ENCODE measurements at regions of chr14 and their contacts with region 1.

Region 1: GRCh38 chr14:68487805-68488590 is 304.9 kb downstream of the ZFP36L1 start:
- DNase-seq: no peak
- H3K4me3 ChIP-seq: no peak overlapping the region
- H3K4me3 Mint-ChIP-seq: no peak overlapping the region
- H3K27ac Mint-ChIP-seq: peak overlapping the region; percentile 94
- H3K4me1 ChIP-seq: peaks cover 50% of the 10 kb centered on the region
- H3K4me1 Mint-ChIP-seq: peaks cover 55% of the 10 kb centered on the region
- H3K27me3 ChIP-seq: no peaks in the 10 kb centered on the region
- H3K27me3 Mint-ChIP-seq: no peaks in the 10 kb centered on the region
- CTCF ChIP-seq: no peak

Region 2: GRCh38 chr14:68426661-68427549 is 61.1 kb before region 1 on chr14:
- CTCF ChIA-PET with region 1: no interaction called
- POLR2A ChIA-PET with region 1: no interaction called
- intact Hi-C with region 1: no loop called
- DNase-seq: no peak
- H3K4me3 ChIP-seq: no peak overlapping the region
- H3K4me3 Mint-ChIP-seq: no peak overlapping the region
- H3K27ac Mint-ChIP-seq: no peak overlapping the region
- H3K4me1 ChIP-seq: peaks cover 8% of the 10 kb centered on the region; the same call in 1 of the 2 replicates
- H3K4me1 Mint-ChIP-seq: peaks cover 6% of the 10 kb centered on the region
- H3K27me3 ChIP-seq: no peaks in the 10 kb centered on the region
- H3K27me3 Mint-ChIP-seq: no peaks in the 10 kb centered on the region
- CTCF ChIP-seq: no peak

Region 3: GRCh38 chr14:68655911-68656360 is 167.9 kb after region 1 on chr14:
- CTCF ChIA-PET with region 1: no interaction called
- POLR2A ChIA-PET with region 1: no interaction called
- intact Hi-C with region 1: loop called (anchors 10 kb)
- DNase-seq: peak; percentile 48 to 50
- H3K4me3 ChIP-seq: no peak overlapping the region
- H3K4me3 Mint-ChIP-seq: no peak overlapping the region
- H3K27ac Mint-ChIP-seq: no peak overlapping the region
- H3K4me1 ChIP-seq: peaks cover 36% of the 10 kb centered on the region
- H3K4me1 Mint-ChIP-seq: peaks cover 19% of the 10 kb centered on the region
- H3K27me3 ChIP-seq: no peaks in the 10 kb centered on the region
- H3K27me3 Mint-ChIP-seq: no peaks in the 10 kb centered on the region
- CTCF ChIP-seq: peak in 1 of 2 experiments; percentile 36

Region 4: GRCh38 chr14:68718023-68718995 is 230.3 kb after region 1 on chr14:
- CTCF ChIA-PET with region 1: no interaction called
- POLR2A ChIA-PET with region 1: no interaction called
- intact Hi-C with region 1: no loop called
- DNase-seq: no peak
- H3K4me3 ChIP-seq: no peak overlapping the region
- H3K4me3 Mint-ChIP-seq: no peak overlapping the region
- H3K27ac Mint-ChIP-seq: no peak overlapping the region
- H3K4me1 ChIP-seq: peaks cover 13% of the 10 kb centered on the region
- H3K4me1 Mint-ChIP-seq: peaks cover 5% of the 10 kb centered on the region
- H3K27me3 ChIP-seq: no peaks in the 10 kb centered on the region
- H3K27me3 Mint-ChIP-seq: no peaks in the 10 kb centered on the region
- CTCF ChIP-seq: peak in 1 of 2 experiments; percentile 17

Measured in Caco-2 (cell line).